Activated T-helper 1 cell treated with anti-CD3 and anti-CD28 coated beads, Interleukin-12 subunit alpha, Interleukin-12 subunit beta, Interleukin-2, Interleukin-4 antibody, amounts not matched to agents 30 ng/mL and 10 ng/mL and 1 ng/mL, durations not matched to agents 14 hours and 24 hours and 36 hours (primary cell): ENCODE measurements at regions of chr5 and their contacts with region 1.

Region 1: DNA sequence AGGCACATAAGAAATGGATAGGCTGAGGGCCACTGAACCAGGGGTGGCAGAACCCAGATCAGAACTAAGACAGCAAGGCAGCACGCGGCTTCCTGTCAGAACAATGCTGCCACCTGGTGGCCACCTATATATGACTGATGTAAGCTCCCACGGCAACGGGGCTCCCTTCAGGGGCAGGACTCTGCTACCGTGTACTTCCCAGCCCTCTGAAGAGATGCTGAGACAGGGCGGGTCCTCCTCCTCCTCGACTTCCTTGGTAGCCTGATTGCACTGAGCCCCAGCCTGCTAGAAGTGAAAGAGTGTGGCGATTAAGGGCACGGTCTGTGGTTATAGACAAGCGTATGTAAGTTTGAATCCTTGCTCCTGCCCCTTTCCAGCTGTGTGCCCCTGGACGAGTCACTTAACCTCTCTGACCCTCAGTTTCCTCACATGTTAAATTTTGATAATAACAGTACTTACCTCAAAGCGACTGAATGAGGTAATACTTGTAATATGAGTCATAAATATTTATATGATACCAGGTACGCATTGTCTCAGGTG is 13.3 kb downstream of the RPS14 start:
- DNase-seq: peak; percentile 84
- H3K4me3 Mint-ChIP-seq: peak overlapping the region; percentile 53
- H3K27ac Mint-ChIP-seq: peak overlapping the region; percentile 12
- H3K4me1 Mint-ChIP-seq: peaks cover 12% of the 10 kb centered on the region
- H3K27me3 Mint-ChIP-seq: peaks cover 2% of the 10 kb centered on the region

Region 2: GRCh38 chr5:150161242-150162141 is 274.7 kb before region 1 on chr5:
- intact Hi-C with region 1: loop called (anchors 1 kb)
- DNase-seq: peak; percentile 68
- H3K4me3 Mint-ChIP-seq: no peak overlapping the region
- H3K27ac Mint-ChIP-seq: no peak overlapping the region
- H3K4me1 Mint-ChIP-seq: no peaks in the 10 kb centered on the region
- H3K27me3 Mint-ChIP-seq: peaks cover 21% of the 10 kb centered on the region

Region 3: GRCh38 chr5:150272526-150272925 is 163.7 kb before region 1 on chr5:
- intact Hi-C with region 1: loop called (anchors 1 kb)
- DNase-seq: no peak
- H3K4me3 Mint-ChIP-seq: no peak overlapping the region
- H3K27ac Mint-ChIP-seq: no peak overlapping the region
- H3K4me1 Mint-ChIP-seq: no peaks in the 10 kb centered on the region
- H3K27me3 Mint-ChIP-seq: peaks cover 14% of the 10 kb centered on the region

Region 4: DNA sequence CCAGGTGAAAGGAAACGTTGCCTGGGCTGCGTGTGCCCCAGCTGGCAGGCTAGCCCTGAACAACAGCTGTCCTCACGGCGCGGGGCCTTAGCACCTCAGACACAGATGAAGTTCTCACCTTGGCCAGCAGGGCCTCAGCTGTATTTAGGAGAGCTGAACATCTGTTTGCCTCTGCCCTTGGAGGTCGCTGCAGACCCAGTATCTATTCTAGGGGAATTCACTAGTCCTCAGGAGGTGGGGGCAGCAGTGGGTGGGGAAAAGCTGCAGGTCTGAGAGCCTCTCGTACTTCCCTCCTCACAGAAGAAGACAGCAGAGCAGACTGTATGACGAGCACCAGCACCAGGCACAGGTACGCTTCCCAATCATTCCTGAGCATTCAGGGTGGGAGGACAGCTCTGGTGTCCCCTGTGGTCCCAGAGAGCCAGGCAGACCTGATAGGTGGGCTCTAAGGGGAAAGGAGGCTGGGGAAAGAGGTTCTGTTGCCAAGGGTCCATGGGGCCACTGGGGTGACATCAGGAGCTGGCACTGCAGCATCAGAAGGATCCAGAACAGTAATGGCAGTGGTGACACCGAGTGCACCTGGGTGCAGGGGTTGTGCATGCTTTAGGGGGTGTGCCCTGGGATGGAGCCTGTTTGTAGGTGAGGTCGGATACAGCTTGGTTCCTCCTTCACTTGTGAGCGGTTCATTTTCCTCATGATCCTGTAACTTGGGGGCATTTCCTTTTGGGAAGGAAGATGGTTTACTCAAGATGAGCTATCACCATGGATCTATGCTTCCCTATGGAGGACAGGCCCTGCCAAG is 37.3 kb before region 1 on chr5:
- intact Hi-C with region 1: loop called (anchors 1 kb)
- DNase-seq: no peak
- H3K4me3 Mint-ChIP-seq: no peak overlapping the region
- H3K27ac Mint-ChIP-seq: no peak overlapping the region
- H3K4me1 Mint-ChIP-seq: no peaks in the 10 kb centered on the region
- H3K27me3 Mint-ChIP-seq: no peaks in the 10 kb centered on the region

Region 5: GRCh38 chr5:150449517-150450339 is 13.5 kb after region 1 on chr5 and contains the start of gene RPS14:
- intact Hi-C with region 1: loop called (anchors 1 kb)
- DNase-seq: peak; percentile 91
- H3K4me3 Mint-ChIP-seq: peak within 1 kb of the TSS; percentile 92
- H3K27ac Mint-ChIP-seq: peak within 1 kb of the TSS; percentile 100
- H3K4me1 Mint-ChIP-seq: peaks cover 40% of the 10 kb centered on the region
- H3K27me3 Mint-ChIP-seq: peaks cover 2% of the 10 kb centered on the region
- total RNA-seq, gene RPS14: 2,328 and 2,429 TPM in 2 replicates